Upper lobe of right lung (tissue), 1 donor: ENCODE measurements at regions of chr14 and their contacts with region 1.

Region 1: DNA sequence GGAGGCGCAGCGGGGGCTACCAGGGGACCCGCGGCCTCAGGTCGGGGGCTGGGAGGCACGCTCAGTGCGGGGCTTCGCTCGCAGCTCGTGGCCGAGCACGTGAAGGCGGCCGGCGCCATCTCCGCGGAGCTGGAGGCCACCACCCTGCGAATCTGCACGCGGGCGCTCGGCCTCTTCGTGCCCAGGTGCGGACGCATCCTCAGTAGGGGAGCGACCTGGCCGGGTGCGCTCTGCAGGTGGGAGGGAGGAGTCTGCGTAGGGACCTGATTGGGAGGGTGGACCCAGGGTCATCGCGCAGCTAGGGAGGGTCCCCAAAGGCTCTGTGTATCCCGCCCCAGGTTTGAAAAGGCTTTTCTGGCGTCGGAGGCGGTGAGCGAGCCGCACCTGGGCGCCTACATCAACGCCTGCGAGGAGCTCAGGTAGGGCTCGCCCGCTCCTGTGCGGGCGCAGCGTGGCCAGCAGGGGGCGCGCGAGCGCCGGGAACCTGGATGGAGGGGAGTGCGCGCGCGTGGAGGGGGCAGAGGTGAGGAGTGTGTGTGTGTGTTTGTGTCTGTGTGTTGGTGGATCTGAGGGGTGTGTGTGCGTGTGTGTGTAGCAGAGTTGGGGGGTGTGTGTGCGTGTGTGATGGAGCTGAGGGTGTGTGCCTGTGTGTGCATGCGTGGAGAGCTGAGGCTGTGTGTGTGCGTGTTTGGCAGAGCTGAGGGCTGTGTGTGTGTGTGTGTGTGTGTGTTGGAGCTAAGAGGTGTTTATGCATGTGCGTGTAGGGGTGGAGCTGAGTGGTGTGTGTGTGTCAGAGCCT is 10.3 kb downstream of the EXOC3L4 start:
- DNase-seq: peak; percentile 89
- ATAC-seq: peak; percentile 84
- H3K4me3 ChIP-seq: no peak overlapping the region
- H3K27ac ChIP-seq: no peak overlapping the region
- H3K4me1 ChIP-seq: peaks cover 25% of the 10 kb centered on the region
- H3K27me3 ChIP-seq: peaks cover 34% of the 10 kb centered on the region
- CTCF ChIP-seq: peak; percentile 96

Region 2: DNA sequence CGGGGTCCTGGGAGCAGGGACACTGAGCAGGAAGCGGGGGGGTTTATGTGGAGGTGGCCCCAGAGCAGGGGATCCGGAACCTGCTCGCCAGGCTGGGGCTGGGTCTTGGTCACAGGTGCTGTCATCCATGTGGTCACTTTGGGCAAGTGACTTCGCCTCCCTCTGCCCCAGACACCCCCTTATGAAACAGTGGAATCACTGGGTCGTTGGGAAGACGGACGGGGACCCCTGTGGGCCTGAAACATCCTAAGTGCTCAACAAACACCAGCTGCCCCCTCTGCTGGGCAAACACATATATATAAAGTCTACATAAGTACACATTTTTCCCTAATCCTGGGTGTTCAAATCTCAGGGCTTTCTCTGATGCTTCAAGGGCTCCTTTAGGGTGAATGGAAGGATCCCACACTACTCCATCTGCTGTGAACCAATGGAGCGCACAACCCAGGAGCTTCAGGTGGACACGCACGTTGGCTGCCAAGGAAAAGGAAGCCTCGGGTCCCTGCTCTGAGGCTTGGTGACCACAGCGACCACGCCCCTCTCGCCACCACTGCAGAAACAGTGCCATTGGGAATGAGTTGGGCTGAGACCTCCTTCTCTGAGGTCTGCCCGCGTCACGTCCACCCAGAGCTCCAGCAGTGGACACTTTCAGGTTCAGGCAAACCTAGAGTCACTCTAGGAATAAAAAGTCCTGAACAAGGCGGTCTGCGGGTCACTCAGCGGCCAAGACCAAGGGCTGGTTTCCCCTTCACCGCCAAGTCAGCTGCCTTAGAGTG is 102.1 kb before region 1 on chr14:
- intact Hi-C with region 1: no loop called
- DNase-seq: no peak
- ATAC-seq: no peak
- H3K4me3 ChIP-seq: no peak overlapping the region
- H3K27ac ChIP-seq: no peak overlapping the region
- H3K4me1 ChIP-seq: no peaks in the 10 kb centered on the region
- H3K27me3 ChIP-seq: no peaks in the 10 kb centered on the region
- CTCF ChIP-seq: no peak

Region 3: GRCh38 chr14:103185051-103185992 is 80.5 kb after region 1 on chr14:
- intact Hi-C with region 1: loop called (anchors 10 kb)
- DNase-seq: peak; percentile 15
- ATAC-seq: no peak
- H3K4me3 ChIP-seq: no peak overlapping the region
- H3K27ac ChIP-seq: no peak overlapping the region
- H3K4me1 ChIP-seq: peaks cover 8% of the 10 kb centered on the region
- H3K27me3 ChIP-seq: peaks cover 30% of the 10 kb centered on the region
- CTCF ChIP-seq: peak; percentile 74

Region 4: GRCh38 chr14:103292426-103293374 is 187.8 kb after region 1 on chr14:
- intact Hi-C with region 1: loop called (anchors 10 kb)
- DNase-seq: peak; percentile 86
- ATAC-seq: peak; percentile 94
- H3K4me3 ChIP-seq: no peak overlapping the region
- H3K27ac ChIP-seq: no peak overlapping the region
- H3K4me1 ChIP-seq: no peaks in the 10 kb centered on the region
- H3K27me3 ChIP-seq: no peaks in the 10 kb centered on the region
- CTCF ChIP-seq: peak; percentile 92